HCT116 (cell line): ENCODE measurements at regions of chr6 and their contacts with region 1.

Region 1: DNA sequence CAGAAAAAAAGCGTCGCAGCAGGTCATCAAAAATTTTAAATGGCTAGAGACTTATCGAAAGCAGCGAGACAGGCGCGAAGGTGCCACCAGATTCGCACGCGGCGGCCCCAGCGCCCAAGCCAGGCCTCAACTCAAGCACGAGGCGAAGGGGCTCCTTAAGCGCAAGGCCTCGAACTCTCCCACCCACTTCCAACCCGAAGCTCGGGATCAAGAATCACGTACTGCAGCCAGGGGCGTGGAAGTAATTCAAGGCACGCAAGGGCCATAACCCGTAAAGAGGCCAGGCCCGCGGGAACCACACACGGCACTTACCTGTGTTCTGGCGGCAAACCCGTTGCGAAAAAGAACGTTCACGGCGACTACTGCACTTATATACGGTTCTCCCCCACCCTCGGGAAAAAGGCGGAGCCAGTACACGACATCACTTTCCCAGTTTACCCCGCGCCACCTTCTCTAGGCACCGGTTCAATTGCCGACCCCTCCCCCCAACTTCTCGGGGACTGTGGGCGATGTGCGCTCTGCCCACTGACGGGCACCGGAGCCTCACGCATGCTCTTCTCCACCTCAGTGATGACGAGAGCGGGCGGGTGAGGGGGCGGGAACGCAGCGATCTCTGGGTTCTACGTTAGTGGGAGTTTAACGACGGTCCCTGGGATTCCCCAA is at the start of gene EEF1A1:
- DNase-seq: peak; percentile 99
- ATAC-seq: peak; percentile 76
- H3K4me3 ChIP-seq: peak within 1 kb of the TSS; percentile 91 to 99
- H3K27ac ChIP-seq: peak within 1 kb of the TSS; percentile 97
- H3K4me1 ChIP-seq: peaks cover 18 to 59% of the 10 kb centered on the region in 2 experiments; a peak in 3 of 4 replicates
- H3K27me3 ChIP-seq: no peaks in the 10 kb centered on the region
- CTCF ChIP-seq: no peak
- POLR2A ChIP-seq: peak; percentile 98
- RAD21 ChIP-seq: no peak
- total RNA-seq, gene EEF1A1: 12,560 TPM

Region 2: DNA sequence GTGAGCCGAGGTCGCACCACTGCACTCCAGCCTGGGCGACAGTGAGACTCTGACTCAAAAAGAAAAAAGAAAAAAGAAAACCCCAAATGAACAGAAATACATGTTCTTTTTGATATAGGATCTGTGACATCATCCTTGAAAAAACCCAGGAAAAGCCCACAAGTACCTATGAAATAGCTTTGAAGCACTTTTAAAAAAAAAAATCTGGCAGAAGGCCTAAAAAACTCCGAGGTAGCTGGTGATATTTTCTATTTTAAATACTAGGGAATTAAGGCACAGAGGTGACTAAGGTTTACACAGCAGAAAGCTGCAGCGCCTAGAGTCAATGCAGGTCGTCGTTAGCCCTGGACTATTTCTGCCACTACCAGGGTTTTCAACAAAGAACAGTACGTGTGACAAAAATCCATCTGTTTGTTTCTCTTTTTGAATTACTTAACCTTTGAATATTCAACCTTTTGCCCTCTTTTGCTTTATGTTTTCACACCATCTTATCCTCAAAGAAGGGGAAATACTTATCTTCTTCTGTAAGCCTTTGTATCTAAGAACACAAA is 39.4 kb after region 1 on chr6:
- CTCF ChIA-PET with region 1: no interaction called
- POLR2A ChIA-PET with region 1: interaction called, 20 read pairs
- RAD21 ChIA-PET with region 1: no interaction called
- intact Hi-C with region 1: loop called (anchors 5 kb)
- DNase-seq: no peak
- ATAC-seq: no peak
- H3K4me3 ChIP-seq: no peak overlapping the region
- H3K27ac ChIP-seq: no peak overlapping the region
- H3K4me1 ChIP-seq: peaks cover 7 to 22% of the 10 kb centered on the region in 2 experiments; a peak in 3 of 4 replicates
- H3K27me3 ChIP-seq: no peaks in the 10 kb centered on the region
- CTCF ChIP-seq: no peak
- POLR2A ChIP-seq: no peak
- RAD21 ChIP-seq: no peak

Region 3: DNA sequence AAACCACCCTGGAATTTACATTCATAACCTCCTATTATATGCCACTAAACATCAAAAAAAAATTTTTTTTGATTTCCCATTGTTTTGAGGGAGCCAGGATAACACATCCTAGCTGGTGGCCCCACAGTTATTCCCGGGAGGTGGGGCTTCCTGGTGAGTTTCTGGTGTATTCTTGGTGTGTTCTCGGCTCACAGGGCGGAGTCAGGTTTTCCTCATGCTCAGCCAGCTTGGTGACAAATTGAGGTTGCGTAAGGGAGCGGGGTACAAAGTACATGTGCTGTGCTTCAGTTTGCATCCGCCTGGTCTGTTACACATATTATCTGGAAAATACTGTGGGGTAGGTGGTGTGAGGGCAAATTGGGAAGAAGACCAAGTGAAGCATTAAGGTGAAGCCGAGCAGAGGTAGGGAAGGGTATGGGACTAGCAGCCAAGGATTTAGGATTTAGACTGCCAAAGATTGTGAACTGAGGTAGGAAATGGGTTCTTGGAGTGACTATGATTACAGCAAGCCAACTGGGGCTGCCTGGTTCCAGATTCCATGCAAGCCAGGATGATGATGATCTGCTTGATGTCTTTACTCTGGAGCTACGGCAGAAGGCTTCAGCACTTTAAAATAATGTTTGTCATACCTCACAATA is 46.3 kb after region 1 on chr6:
- CTCF ChIA-PET with region 1: interaction called, 3 read pairs
- POLR2A ChIA-PET with region 1: interaction called, 16 read pairs
- RAD21 ChIA-PET with region 1: no interaction called
- intact Hi-C with region 1: loop called (anchors 5 kb)
- DNase-seq: peak; percentile 75
- ATAC-seq: peak; percentile 83
- H3K4me3 ChIP-seq: no peak overlapping the region; a peak in 1 of 4 replicates
- H3K27ac ChIP-seq: peak overlapping the region; percentile 67
- H3K4me1 ChIP-seq: peaks cover 26 to 43% of the 10 kb centered on the region in 2 experiments
- H3K27me3 ChIP-seq: no peaks in the 10 kb centered on the region
- CTCF ChIP-seq: no peak
- POLR2A ChIP-seq: no peak
- RAD21 ChIP-seq: no peak; the same call in 1 of the 2 replicates

Region 4: GRCh38 chr6:73580247-73581149 is 59.7 kb after region 1 on chr6:
- CTCF ChIA-PET with region 1: interaction called, 3 read pairs
- POLR2A ChIA-PET with region 1: interaction called, 68 read pairs
- RAD21 ChIA-PET with region 1: interaction called, 4 to 5 read pairs
- intact Hi-C with region 1: loop called (anchors 1 kb)
- DNase-seq: peak; percentile 96
- ATAC-seq: peak; percentile 82
- H3K4me3 ChIP-seq: peak overlapping the region; percentile 37 to 52
- H3K27ac ChIP-seq: peak overlapping the region; percentile 97
- H3K4me1 ChIP-seq: peaks cover 59% of the 10 kb centered on the region in 2 experiments
- H3K27me3 ChIP-seq: no peaks in the 10 kb centered on the region
- CTCF ChIP-seq: peak in 2 of 3 experiments; percentile 62 to 67; a peak in 4 of 6 replicates
- POLR2A ChIP-seq: peak; percentile 45
- RAD21 ChIP-seq: peak; percentile 52; the same call in 1 of the 2 replicates

Region 5: DNA sequence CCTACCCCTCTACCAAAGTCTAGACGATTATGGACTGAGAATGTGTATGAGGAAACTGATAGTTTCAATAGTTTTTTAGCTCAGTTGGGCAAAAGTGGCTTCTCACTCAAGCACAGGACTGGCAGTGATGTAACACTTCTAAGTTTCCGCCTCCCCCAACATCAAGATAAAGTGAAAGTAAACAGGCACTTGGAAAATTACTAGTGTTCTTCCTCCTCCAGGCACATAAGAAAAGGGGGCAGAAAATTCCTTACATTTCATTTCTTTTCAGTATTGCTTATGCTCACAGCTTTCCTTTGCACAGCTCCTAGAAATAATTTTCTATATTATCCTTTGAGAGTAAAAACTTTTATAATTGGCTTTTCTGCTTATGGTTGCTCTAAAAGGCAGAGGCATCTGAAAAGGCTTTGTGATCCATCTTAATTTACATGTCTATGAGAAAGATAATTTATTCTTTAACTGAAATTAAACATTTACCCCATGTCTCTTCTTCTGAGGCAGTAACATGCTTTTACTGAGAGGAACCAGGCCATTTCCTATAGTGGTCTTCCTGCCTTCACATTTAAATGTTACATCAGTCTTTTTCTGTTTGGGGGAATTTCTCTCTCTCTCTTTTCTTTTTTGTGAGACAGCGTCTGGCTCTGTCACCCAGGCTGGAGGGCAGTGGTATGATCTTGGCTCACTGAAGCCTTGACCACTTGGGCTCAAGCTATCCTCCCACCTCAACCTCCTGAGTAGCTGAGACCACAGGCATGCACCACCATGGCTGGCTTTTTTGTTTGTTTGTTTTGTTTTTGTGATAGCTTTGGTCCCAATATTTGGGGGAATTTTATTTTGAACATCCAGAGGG is 65.0 kb after region 1 on chr6:
- CTCF ChIA-PET with region 1: interaction called, 3 read pairs
- POLR2A ChIA-PET with region 1: interaction called, 68 read pairs
- RAD21 ChIA-PET with region 1: interaction called, 4 to 5 read pairs
- intact Hi-C with region 1: loop called (anchors 1 kb)
- DNase-seq: peak; percentile 72
- ATAC-seq: peak; percentile 61
- H3K4me3 ChIP-seq: peak overlapping the region; percentile 30 to 39
- H3K27ac ChIP-seq: peak overlapping the region; percentile 95
- H3K4me1 ChIP-seq: peaks cover 46 to 50% of the 10 kb centered on the region in 2 experiments
- H3K27me3 ChIP-seq: no peaks in the 10 kb centered on the region
- CTCF ChIP-seq: no peak
- POLR2A ChIP-seq: no peak
- RAD21 ChIP-seq: no peak

Region 6: DNA sequence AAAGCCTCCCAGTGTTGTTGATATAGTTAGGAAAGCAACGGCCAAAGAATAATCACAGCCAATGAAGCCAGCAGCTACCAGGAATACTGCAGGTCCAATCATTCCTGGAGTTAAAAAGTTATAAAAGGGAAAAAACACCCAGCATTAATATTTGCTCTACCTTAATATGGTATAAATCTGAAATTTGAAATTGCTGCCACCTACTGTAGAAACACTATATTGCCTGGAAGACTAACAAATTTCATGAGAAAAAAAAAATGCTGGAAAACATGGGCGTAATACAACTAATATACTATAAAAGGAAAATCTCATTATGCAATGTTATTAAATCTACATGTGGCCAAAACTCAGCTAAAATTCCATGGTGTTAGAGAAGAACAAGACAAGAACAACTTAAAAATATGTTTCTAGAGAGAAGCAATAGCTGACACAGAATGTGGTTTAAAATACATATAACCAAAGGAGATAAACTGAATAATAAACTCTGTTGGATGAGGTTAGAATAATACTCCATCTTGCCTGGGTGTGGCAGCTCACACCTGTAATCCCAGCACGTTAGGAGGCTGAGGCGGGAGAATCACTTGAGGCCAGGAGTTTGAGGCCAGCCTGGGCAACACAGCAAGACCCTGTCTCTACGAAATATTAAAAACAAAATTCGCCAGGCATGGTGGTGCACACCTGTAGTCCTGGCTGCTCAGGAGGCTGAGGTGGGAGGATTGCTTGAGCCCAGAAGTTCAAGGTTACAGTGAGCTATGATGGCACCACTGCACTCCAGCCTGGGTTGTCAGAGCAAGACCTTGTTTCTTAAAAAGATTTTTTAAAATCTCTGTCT is 89.8 kb after region 1 on chr6:
- CTCF ChIA-PET with region 1: interaction called, 8 read pairs
- POLR2A ChIA-PET with region 1: interaction called, 26 read pairs
- RAD21 ChIA-PET with region 1: interaction called in 1 of 2 experiments, 3 read pairs
- intact Hi-C with region 1: loop called (anchors 1 kb)
- DNase-seq: peak; percentile 18
- ATAC-seq: peak; percentile 73
- H3K4me3 ChIP-seq: no peak overlapping the region
- H3K27ac ChIP-seq: peak overlapping the region; percentile 11; the same call in 1 of the 2 replicates
- H3K4me1 ChIP-seq: peaks cover 0 to 9% of the 10 kb centered on the region in 2 experiments; a peak in 1 of 4 replicates
- H3K27me3 ChIP-seq: no peaks in the 10 kb centered on the region
- CTCF ChIP-seq: peak; percentile 40 to 69 (median 60)
- POLR2A ChIP-seq: no peak
- RAD21 ChIP-seq: peak; percentile 86

Region 7: GRCh38 chr6:73624896-73625295 is 104.1 kb after region 1 on chr6:
- CTCF ChIA-PET with region 1: no interaction called
- POLR2A ChIA-PET with region 1: no interaction called
- RAD21 ChIA-PET with region 1: no interaction called
- intact Hi-C with region 1: no loop called
- DNase-seq: no peak
- ATAC-seq: no peak
- H3K4me3 ChIP-seq: no peak overlapping the region
- H3K27ac ChIP-seq: no peak overlapping the region
- H3K4me1 ChIP-seq: no peaks in the 10 kb centered on the region
- H3K27me3 ChIP-seq: no peaks in the 10 kb centered on the region
- CTCF ChIP-seq: no peak
- POLR2A ChIP-seq: no peak
- RAD21 ChIP-seq: no peak

Region 8: GRCh38 chr6:74585779-74586178 is 1065.0 kb after region 1 on chr6:
- CTCF ChIA-PET with region 1: no interaction called
- POLR2A ChIA-PET with region 1: no interaction called
- RAD21 ChIA-PET with region 1: no interaction called
- intact Hi-C with region 1: no loop called
- DNase-seq: no peak
- ATAC-seq: no peak
- H3K4me3 ChIP-seq: no peak overlapping the region
- H3K27ac ChIP-seq: no peak overlapping the region
- H3K4me1 ChIP-seq: no peaks in the 10 kb centered on the region
- H3K27me3 ChIP-seq: no peaks in the 10 kb centered on the region
- CTCF ChIP-seq: no peak
- POLR2A ChIP-seq: no peak
- RAD21 ChIP-seq: no peak